ENCODE measurements at regions of chr2 and their contacts with region 1.

Region 1: DNA sequence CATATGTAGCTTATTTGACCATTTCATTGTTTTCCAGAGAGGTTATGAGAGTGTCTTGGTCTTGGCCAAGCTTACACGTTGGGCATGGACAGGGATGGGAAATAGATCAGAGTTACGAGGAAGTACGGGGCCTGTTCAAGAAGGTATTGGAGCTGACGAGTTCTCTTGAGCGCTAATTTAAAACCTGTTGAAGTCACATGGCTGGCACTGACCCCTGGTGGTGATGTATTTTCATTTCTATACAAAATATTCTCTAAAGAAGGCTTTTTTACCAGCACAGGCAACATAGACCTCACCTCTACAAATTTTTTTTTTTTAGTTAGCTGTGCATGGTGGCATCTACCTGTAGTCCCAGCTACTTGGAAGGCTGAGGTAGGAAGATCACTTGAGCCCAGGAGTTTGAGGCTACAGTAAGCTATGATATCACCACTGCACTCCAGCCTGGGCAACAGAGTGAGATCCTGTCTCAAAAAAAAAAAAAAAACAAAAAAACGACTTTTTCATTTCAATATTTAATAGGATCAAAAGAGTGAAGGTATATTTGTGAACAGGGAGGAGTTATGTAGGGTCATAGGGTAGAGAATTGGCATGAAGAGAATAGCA is 19.6 kb downstream of the UGP2 start:
- DNase-seq: no peak
- ATAC-seq: peak; percentile 61

Region 2: DNA sequence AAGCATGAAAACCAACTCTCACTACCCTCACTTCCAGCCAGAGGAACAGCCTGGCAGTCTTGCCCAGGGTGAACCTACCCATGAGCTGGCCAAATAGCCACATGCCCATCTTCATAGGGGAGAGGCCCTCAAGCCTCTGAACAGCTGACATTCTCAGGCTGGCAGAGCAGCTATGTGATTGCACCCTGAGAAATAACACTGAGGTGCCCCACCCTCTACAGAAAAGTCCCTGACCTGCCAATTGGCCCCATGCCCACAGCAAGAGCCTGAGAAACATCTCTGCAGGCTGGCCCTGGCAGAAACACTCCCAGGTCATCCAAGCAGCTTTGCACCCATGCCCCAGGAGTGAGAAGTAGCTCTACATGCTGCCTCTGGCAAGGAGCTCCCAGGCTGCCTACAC is 938.1 kb before region 1 on chr2:
- intact Hi-C with region 1: no loop called
- DNase-seq: no peak
- ATAC-seq: no peak

Region 3: DNA sequence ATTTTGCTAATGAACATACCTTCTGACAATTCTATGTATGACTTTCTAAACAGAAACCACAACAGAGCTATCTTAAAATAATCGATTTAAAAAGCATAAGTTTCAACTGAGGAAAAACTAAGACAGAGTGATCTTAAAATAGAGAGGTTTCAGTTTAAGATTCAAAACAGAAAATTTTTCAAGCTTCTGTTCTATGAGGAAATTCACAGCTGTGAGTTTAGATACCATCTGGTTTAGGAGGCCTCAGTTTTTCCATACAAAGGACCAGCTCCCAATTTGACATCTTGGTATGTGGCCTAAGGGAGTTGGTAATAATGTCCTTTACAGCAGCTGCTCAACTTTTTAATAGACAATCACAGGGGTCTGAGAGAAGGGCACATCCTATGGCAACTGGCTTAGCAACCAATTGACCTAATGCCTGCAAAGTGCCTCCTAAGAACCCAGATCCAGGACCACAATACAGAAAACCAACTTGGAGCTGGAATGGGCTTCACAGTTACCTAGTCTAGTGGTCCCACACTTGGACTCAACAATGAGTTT is 232.8 kb before region 1 on chr2:
- intact Hi-C with region 1: no loop called
- DNase-seq: no peak
- ATAC-seq: no peak

Region 4: DNA sequence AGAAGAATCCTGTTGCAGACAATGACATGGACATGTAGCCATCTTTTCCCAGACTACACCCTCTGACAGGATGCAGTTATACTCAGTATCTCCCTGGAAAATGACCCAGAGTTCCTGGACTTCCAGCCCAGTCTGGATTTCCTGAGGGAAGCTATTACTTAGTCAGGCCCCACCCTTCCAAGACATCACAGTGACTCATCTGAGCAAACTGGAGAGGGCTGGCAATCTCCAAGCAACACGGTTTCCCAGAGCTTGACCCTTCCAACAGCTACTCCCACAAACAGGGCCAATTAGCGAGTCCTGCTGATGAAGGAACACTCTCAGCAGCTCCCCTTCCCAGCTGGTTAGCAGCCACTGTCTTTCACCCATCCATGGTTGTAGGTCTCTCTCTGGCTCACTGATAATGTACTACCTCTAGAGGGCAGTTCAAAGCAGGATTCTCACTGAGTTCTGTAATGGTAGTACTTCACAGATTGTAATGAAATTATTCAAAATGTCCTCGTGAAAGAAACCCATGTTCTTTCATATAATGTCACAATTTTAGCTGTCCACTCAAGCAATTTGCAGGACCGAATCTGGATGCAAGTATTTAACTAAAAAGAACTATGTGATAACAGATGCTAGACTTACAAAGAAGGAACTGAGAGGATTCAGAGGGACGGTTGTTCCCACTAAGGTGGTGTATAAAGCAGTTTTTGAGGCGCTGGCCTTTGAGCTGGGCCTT is 162.3 kb before region 1 on chr2:
- intact Hi-C with region 1: loop called (anchors 10 kb)
- DNase-seq: peak; percentile 33
- ATAC-seq: peak; percentile 93

Measured in left ventricle myocardium superior (tissue), 1 donor.